B cell (primary cell): ENCODE measurements at regions of chr17 and their contacts with region 1.

Region 1: DNA sequence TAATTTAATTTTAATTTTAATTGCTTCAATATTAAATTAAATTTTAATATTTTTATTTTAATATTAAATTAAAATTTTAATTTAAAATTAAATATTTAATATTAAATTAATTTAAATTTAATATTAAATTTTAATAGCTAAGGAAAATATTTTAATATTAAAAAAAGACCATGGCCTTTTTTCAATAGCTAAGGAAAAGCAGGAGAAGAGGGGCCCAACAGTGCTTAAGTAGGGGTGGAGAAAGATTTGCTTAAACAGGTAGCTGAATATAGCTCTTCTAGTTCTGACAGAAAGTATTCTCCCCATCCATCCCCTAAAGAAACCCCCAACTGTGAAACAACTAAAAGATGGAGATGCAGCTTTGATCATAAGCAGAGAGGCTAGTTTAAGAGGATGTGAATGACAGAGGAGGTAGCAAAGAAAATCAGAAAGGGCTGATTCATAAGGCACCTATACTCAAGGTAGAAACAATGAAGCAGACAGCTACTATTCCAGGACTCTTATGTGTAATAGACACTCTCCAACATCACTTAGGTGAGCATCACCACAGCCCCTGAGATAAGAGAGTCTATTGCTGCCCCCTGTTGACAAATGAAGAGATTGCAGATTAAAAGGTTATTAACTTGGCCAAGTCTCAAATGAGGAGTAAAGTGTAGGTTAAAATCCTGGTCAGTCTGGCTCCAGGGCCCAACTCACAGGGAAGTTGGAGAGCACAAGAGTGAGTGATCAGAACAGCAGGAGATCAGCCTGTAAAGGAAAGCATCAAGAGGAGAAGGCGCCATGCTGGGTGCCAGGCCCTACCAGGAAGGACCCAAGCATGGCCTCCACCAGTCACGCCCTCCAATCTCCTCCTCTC is 7.8 kb upstream of the RNASEK start:
- DNase-seq: peak; percentile 83
- ATAC-seq: peak; percentile 93
- H3K4me3 ChIP-seq: no peak overlapping the region
- H3K4me3 Mint-ChIP-seq: no peak overlapping the region
- H3K27ac ChIP-seq: no peak overlapping the region
- H3K27ac Mint-ChIP-seq: peak overlapping the region; percentile 12
- H3K4me1 ChIP-seq: peaks cover 0 to 6% of the 10 kb centered on the region in 2 donors
- H3K4me1 Mint-ChIP-seq: peaks cover 24% of the 10 kb centered on the region
- H3K27me3 ChIP-seq: no peaks in the 10 kb centered on the region
- H3K27me3 Mint-ChIP-seq: no peaks in the 10 kb centered on the region
- CTCF ChIP-seq: peak; percentile 87

Region 2: DNA sequence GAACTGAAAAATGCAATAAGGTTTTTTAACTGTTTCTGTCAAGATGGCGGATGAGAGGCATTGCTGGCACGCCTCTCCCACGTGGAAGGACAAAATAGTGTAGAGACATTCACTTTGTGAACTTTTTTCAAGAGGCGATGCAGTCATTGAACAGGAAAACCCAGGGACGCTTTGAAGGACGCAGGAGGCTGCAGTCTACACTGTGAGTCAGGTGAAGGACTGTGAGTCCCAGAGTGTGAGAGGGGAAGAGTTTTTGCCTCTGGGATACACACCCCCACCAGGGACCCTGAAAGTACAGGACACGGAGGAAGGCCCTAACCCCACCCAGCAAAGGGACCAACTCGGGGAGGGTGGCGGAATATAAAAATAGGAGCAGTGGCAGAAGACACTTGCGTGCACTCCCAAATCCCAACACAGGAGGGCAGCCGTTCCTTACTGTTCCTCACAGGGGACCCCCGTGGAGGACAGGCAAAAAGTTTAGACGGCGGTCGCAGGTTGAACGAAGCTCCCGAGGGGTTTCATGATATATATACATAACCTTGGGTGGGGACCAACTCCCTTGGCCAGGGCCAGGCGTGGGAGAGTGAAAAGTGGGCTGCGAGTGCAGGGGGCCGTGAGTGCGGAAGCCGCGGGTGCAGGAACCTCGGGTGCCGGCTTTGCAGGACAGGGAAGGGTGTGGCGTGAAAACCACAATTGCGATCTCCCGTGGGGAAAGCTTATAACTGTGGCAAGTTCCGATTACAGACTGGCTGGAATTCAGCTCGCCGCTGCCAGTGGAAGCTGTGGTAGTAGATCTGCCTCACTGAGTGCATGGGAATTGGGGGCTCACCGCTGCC is 90.8 kb before region 1 on chr17:
- CTCF ChIA-PET with region 1: interaction called, 147 read pairs
- POLR2A ChIA-PET with region 1: no interaction called
- intact Hi-C with region 1: loop called (anchors 1 kb)
- DNase-seq: peak; percentile 83
- ATAC-seq: peak; percentile 92
- H3K4me3 ChIP-seq: peak overlapping the region in 4 of 5 experiments; percentile 32 to 49 (median 45)
- H3K4me3 Mint-ChIP-seq: peak overlapping the region; percentile 89
- H3K27ac ChIP-seq: no peak overlapping the region
- H3K27ac Mint-ChIP-seq: no peak overlapping the region
- H3K4me1 ChIP-seq: peaks cover 5 to 11% of the 10 kb centered on the region in 2 donors
- H3K4me1 Mint-ChIP-seq: peaks cover 14% of the 10 kb centered on the region
- H3K27me3 ChIP-seq: peaks cover 0 to 10% (median 4%) of the 10 kb centered on the region in 4 experiments
- H3K27me3 Mint-ChIP-seq: peaks cover 18% of the 10 kb centered on the region
- CTCF ChIP-seq: peak; percentile 85

Region 3: DNA sequence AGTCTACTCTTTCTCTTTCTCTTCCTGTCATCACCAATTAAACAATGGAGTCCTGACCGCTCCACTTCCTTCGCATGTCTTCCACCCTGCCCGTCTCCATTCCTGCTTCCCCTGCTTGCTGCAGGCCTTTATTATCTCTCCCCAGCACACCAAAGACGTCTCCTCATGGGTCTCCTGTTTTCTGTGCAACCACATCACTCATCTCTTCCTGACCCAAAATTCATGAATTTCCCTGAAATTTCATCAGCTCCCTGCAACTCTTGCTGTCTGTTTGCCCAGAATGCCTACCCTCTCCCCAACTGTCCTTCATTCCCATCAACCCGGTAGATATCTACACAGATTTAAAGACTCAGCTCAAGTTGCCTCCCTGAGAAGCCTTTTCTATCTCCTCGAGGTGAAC is 85.5 kb before region 1 on chr17:
- CTCF ChIA-PET with region 1: interaction called, 147 read pairs
- POLR2A ChIA-PET with region 1: no interaction called
- intact Hi-C with region 1: loop called (anchors 1 kb)
- DNase-seq: no peak
- ATAC-seq: no peak
- H3K4me3 ChIP-seq: no peak overlapping the region
- H3K4me3 Mint-ChIP-seq: no peak overlapping the region
- H3K27ac ChIP-seq: no peak overlapping the region
- H3K27ac Mint-ChIP-seq: no peak overlapping the region
- H3K4me1 ChIP-seq: peaks cover 6 to 9% of the 10 kb centered on the region in 2 donors
- H3K4me1 Mint-ChIP-seq: peaks cover 10% of the 10 kb centered on the region
- H3K27me3 ChIP-seq: peaks cover 0 to 8% (median 2%) of the 10 kb centered on the region in 4 experiments
- H3K27me3 Mint-ChIP-seq: peaks cover 14% of the 10 kb centered on the region
- CTCF ChIP-seq: no peak

Region 4: GRCh38 chr17:7021993-7022778 is 17.6 kb after region 1 on chr17:
- CTCF ChIA-PET with region 1: interaction called, 39 read pairs
- POLR2A ChIA-PET with region 1: interaction called, 3 read pairs
- intact Hi-C with region 1: loop called (anchors 1 kb)
- DNase-seq: peak; percentile 92
- ATAC-seq: peak; percentile 82
- H3K4me3 ChIP-seq: peak overlapping the region in 4 of 5 experiments; percentile 44 to 71 (median 62)
- H3K4me3 Mint-ChIP-seq: peak overlapping the region; percentile 82
- H3K27ac ChIP-seq: peak overlapping the region; percentile 73 to 80
- H3K27ac Mint-ChIP-seq: peak overlapping the region; percentile 92
- H3K4me1 ChIP-seq: peaks cover 21 to 27% of the 10 kb centered on the region in 2 donors
- H3K4me1 Mint-ChIP-seq: peaks cover 28% of the 10 kb centered on the region
- H3K27me3 ChIP-seq: no peaks in the 10 kb centered on the region
- H3K27me3 Mint-ChIP-seq: no peaks in the 10 kb centered on the region
- CTCF ChIP-seq: peak; percentile 98